Dendritic cell treated with granulocyte-macrophage colony-stimulating factor and Interleukin-4, amounts not matched to agents 40 ng/mL and 50 ng/mL, for 4 days (primary cell): ENCODE measurements at regions of chr1 and their contacts with region 1.

Region 1: GRCh38 chr1:93219443-93219842 is 38.9 kb downstream of the CCDC18 start:
- H3K4me3 Mint-ChIP-seq: no peak overlapping the region
- H3K27ac Mint-ChIP-seq: no peak overlapping the region
- H3K4me1 Mint-ChIP-seq: no peaks in the 10 kb centered on the region
- H3K27me3 Mint-ChIP-seq: no peaks in the 10 kb centered on the region

Region 2: DNA sequence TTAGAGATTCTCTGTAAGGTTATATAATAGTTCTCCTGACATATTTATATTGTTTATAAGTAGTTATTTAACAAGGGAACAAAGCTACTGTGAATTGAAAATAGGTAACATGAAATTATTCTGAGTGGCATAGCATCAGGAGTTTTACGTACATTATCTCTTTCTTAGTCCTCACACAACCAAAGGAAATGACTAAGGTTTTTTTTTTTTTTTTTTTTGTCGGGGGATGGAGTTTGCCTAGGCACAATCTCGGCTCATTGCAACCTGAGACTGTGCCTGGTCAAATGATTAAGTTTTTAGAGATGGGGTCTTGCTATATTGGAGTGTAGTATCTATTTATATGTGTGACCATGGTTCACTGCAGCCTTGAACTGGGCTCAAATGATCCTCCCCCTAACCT is 64.1 kb before region 1 on chr1:
- intact Hi-C with region 1: loop called (anchors 10 kb)
- H3K4me3 Mint-ChIP-seq: no peak overlapping the region
- H3K27ac Mint-ChIP-seq: no peak overlapping the region
- H3K4me1 Mint-ChIP-seq: peaks cover 5% of the 10 kb centered on the region
- H3K27me3 Mint-ChIP-seq: no peaks in the 10 kb centered on the region

Region 3: GRCh38 chr1:93196591-93196990 is 22.9 kb before region 1 on chr1:
- intact Hi-C with region 1: no loop called
- H3K4me3 Mint-ChIP-seq: no peak overlapping the region
- H3K27ac Mint-ChIP-seq: no peak overlapping the region
- H3K4me1 Mint-ChIP-seq: peaks cover 13% of the 10 kb centered on the region
- H3K27me3 Mint-ChIP-seq: no peaks in the 10 kb centered on the region

Region 4: DNA sequence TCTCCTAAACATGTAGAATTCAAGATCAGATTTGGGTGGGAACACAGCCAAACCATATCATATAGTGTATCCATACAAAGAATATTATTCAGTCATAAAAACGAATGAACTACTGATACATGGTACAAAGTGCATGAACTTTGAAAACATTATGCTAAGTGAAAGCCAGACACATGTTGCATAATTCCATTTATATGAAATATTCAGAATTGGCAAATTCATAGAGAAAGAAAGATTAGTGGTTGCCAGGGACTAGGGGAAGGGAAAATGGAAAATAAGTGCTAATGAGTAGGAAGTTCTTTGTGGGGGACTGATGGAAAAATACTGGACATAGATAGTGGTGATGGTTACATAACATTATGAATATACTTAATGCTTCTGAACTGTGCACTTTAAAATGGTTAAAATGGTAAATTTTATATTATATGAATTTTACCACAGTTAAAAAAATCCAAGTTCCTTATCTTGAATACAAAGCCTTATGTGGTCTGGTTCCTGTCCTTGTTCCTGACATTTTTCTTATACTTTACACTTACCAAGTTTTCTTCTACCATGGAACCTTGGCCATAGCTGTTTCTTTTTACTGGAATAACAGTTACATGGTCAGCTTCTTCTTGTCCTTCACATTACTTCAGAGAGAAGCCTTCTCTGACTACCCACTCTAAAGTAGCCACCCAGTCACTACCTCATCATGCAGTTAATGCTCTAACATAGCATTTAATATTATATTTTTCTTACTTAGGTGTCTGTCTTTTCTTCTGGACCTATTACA is 25.0 kb after region 1 on chr1:
- intact Hi-C with region 1: no loop called
- H3K4me3 Mint-ChIP-seq: no peak overlapping the region
- H3K27ac Mint-ChIP-seq: no peak overlapping the region
- H3K4me1 Mint-ChIP-seq: no peaks in the 10 kb centered on the region
- H3K27me3 Mint-ChIP-seq: no peaks in the 10 kb centered on the region

Region 5: DNA sequence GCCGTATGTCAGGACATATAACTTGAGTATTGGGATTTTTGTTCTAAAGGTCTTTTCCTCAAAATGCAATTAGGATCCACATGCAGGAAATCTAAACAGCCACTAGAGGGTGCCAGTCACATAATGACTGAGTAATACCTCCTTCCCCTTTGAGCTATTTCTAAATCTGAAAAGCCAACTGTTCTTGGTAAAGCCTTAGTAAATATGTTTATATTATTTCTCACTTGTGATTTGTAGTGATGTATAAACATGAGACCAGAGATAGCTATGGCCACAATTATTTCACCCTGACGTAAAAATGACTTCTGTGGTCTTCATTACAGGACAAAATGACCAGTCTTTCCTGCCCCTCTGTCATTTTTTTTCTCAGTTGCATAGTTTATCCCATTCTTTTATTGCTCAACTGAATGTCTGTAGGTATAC is 85.3 kb after region 1 on chr1:
- intact Hi-C with region 1: no loop called
- H3K4me3 Mint-ChIP-seq: no peak overlapping the region
- H3K27ac Mint-ChIP-seq: no peak overlapping the region
- H3K4me1 Mint-ChIP-seq: no peaks in the 10 kb centered on the region
- H3K27me3 Mint-ChIP-seq: no peaks in the 10 kb centered on the region